ENCODE measurements at regions of chr2 and their contacts with region 1.

Region 1: DNA sequence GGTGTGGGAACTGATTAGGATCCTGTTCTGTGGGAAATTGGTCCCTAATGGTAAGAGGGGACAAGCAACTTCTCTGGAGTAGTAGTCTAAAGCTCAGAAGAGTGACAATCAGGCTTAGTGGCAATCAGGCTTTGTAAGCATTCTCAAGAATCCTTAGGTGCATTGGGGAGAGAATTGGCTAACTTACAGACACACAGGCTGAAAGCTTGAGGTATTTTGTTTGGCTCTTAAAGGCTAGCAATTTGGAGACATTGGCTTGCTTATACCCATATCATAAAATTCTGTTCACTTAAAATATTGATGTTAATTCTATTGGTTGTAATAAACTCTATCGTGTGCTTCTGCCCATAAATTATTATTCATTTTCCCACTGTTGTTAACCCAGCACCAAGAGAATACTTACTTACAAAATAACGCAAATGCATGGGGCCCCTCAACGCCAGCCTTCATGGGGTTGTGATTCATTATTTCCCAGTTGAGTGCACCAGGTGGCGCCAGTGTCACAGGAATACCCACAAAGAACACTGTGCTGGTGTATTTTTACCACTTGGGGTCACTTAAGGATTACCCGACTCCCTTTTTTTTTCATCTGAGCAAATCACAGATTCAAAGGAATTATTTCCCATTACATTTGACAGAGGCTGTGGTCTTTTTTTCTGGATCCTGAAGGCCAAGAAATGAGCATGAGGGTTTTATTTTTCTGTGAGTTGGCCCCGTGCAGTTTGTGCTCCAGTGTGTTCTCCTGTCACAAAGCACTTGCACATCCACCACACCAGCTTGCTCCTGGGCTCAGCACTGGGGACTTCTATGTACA is 45.5 kb downstream of the DDX1 start:
- DNase-seq: peak in 3 of 5 donors; percentile 67 to 73 (median 71)
- ATAC-seq: peak; percentile 63 to 86 (median 85)
- H3K4me3 ChIP-seq: no peak overlapping the region
- H3K27ac ChIP-seq: peak overlapping the region in 1 of 12 donors; percentile 8
- H3K4me1 ChIP-seq: peaks cover 8 to 61% (median 29%) of the 10 kb centered on the region in 12 donors
- H3K27me3 ChIP-seq: no peaks in the 10 kb centered on the region
- CTCF ChIP-seq: peak; percentile 67 to 97 (median 90)
- POLR2A ChIP-seq: no peak

Region 2: GRCh38 chr2:15748736-15749323 is 111.7 kb after region 1 on chr2:
- intact Hi-C with region 1: loop called in 6 of 10 experiments (anchors 5 to 10 kb)
- DNase-seq: no peak
- ATAC-seq: no peak
- H3K4me3 ChIP-seq: no peak overlapping the region
- H3K27ac ChIP-seq: peak overlapping the region in 1 of 12 donors; percentile 40
- H3K4me1 ChIP-seq: peaks cover 0 to 41% (median 20%) of the 10 kb centered on the region in 12 donors
- H3K27me3 ChIP-seq: no peaks in the 10 kb centered on the region
- CTCF ChIP-seq: peak in 10 of 12 donors; percentile 17 to 39 (median 26)
- POLR2A ChIP-seq: no peak

Region 3: GRCh38 chr2:16218625-16219024 is 581.4 kb after region 1 on chr2:
- intact Hi-C with region 1: loop called in 1 of 10 experiments (anchors 5 kb)
- DNase-seq: no peak
- ATAC-seq: no peak
- H3K4me3 ChIP-seq: no peak overlapping the region
- H3K27ac ChIP-seq: no peak overlapping the region
- H3K4me1 ChIP-seq: peaks cover 0 to 8% (median 0%) of the 10 kb centered on the region in 12 donors
- H3K27me3 ChIP-seq: no peaks in the 10 kb centered on the region
- CTCF ChIP-seq: peak in 9 of 12 donors; percentile 10 to 48 (median 29)
- POLR2A ChIP-seq: no peak

Region 4: GRCh38 chr2:16487686-16488085 is 850.5 kb after region 1 on chr2:
- intact Hi-C with region 1: loop called in 3 of 10 experiments (anchors 5 to 10 kb)
- DNase-seq: peak in 1 of 5 donors; percentile 10
- ATAC-seq: peak in 2 of 4 donors; percentile 62 to 70
- H3K4me3 ChIP-seq: no peak overlapping the region
- H3K27ac ChIP-seq: no peak overlapping the region
- H3K4me1 ChIP-seq: no peaks in the 10 kb centered on the region
- H3K27me3 ChIP-seq: peaks cover 0 to 6% (median 0%) of the 10 kb centered on the region in 9 donors
- CTCF ChIP-seq: peak; percentile 19 to 54 (median 42)
- POLR2A ChIP-seq: no peak

Region 5: GRCh38 chr2:16608661-16609643 is 971.8 kb after region 1 on chr2:
- intact Hi-C with region 1: loop called (anchors 1 to 5 kb)
- DNase-seq: peak; percentile 81 to 91 (median 85)
- ATAC-seq: peak; percentile 83 to 92 (median 88)
- H3K4me3 ChIP-seq: peak overlapping the region in 11 of 12 donors; percentile 10 to 56 (median 51)
- H3K27ac ChIP-seq: peak overlapping the region in 3 of 12 donors; percentile 32 to 77 (median 60)
- H3K4me1 ChIP-seq: peaks cover 0 to 36% (median 10%) of the 10 kb centered on the region in 12 donors
- H3K27me3 ChIP-seq: no peaks in the 10 kb centered on the region
- CTCF ChIP-seq: peak; percentile 84 to 96 (median 93)
- POLR2A ChIP-seq: no peak